Mammary epithelial cell (primary cell): ENCODE measurements at regions of chr2 and their contacts with region 1.

Region 1: DNA sequence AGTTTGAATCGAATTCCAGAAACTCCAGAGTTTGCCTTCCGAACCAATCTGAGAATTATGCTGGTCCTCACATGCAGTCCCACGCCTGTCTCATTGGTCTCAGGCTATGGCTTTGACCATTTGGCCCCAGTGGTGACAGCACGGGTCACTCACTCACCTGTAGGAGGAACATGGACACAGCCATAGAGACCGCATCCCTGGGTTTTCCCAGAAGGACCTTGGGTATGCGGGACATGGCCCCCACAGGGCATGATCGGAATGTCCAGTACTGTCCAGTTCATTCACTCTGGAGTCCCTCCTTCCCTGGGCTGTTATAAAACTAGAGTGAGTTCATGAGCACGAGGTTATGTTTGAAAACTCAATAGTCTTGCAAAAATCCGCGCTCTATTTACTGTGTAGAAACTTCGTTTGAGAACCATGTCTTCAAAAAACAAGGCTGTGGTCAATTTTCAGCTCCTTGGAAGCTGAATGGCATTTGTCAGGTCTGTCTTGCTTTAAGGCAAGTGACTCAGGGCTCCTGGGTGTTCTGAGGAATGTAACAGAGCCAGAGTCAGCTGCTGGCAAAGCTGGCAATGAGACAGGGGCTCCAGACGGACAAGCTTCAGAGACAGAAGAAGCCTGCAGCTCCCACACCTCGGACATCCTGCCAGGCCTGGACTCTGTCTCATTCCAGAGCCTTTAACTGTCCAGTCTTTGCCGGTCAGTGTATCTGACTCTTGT is 86.7 kb upstream of the TMEM18 start:
- DNase-seq: no peak
- H3K4me3 ChIP-seq: no peak overlapping the region
- H3K27ac ChIP-seq: no peak overlapping the region
- H3K4me1 ChIP-seq: no peaks in the 10 kb centered on the region
- H3K27me3 ChIP-seq: no peaks in the 10 kb centered on the region
- CTCF ChIP-seq: no peak

Region 2: GRCh38 chr2:854460-854859 is 90.5 kb after region 1 on chr2:
- CTCF ChIA-PET with region 1: no interaction called
- dilution Hi-C with region 1: loop called (anchors 5 kb)
- in situ Hi-C with region 1: no loop called
- intact Hi-C with region 1: no loop called
- DNase-seq: no peak
- H3K4me3 ChIP-seq: no peak overlapping the region
- H3K27ac ChIP-seq: no peak overlapping the region
- H3K4me1 ChIP-seq: no peaks in the 10 kb centered on the region
- H3K27me3 ChIP-seq: no peaks in the 10 kb centered on the region
- CTCF ChIP-seq: peak in 1 of 2 donors; percentile 22